Psoas muscle (tissue), 8 donors: ENCODE measurements at regions of chr2 and their contacts with region 1.

Region 1: DNA sequence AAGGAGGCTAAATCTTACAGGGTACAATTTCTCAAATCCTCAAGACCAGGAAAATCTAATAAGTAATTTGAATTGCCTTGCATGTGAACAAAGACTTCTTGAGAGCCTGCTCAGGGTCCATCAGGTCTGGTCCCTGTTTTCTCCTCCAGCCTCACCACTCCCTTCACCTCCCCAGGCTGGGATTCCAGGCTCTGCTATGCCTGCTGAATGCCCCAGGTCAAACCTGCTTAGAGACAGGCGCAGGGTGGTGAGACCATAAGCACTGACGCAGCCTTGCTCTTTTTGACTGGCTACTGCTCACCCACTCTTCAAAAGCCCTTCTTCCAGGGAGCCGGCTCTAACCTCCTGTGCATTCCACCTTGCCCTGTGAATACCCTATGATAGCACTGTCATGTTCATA is 356.4 kb upstream of the ACVR2A start:
- DNase-seq: no peak
- ATAC-seq: no peak
- H3K4me3 ChIP-seq: no peak overlapping the region
- H3K27ac ChIP-seq: no peak overlapping the region
- H3K4me1 ChIP-seq: no peaks in the 10 kb centered on the region
- H3K27me3 ChIP-seq: no peaks in the 10 kb centered on the region
- CTCF ChIP-seq: no peak

Region 2: GRCh38 chr2:147531269-147531668 is 42.8 kb after region 1 on chr2:
- intact Hi-C with region 1: loop called in 1 of 2 experiments (anchors 2 kb)
- DNase-seq: no peak
- ATAC-seq: no peak
- H3K4me3 ChIP-seq: no peak overlapping the region
- H3K27ac ChIP-seq: no peak overlapping the region
- H3K4me1 ChIP-seq: no peaks in the 10 kb centered on the region
- H3K27me3 ChIP-seq: no peaks in the 10 kb centered on the region
- CTCF ChIP-seq: no peak